A673 (cell line): ENCODE measurements at regions of chr17 and their contacts with region 1.

Region 1: DNA sequence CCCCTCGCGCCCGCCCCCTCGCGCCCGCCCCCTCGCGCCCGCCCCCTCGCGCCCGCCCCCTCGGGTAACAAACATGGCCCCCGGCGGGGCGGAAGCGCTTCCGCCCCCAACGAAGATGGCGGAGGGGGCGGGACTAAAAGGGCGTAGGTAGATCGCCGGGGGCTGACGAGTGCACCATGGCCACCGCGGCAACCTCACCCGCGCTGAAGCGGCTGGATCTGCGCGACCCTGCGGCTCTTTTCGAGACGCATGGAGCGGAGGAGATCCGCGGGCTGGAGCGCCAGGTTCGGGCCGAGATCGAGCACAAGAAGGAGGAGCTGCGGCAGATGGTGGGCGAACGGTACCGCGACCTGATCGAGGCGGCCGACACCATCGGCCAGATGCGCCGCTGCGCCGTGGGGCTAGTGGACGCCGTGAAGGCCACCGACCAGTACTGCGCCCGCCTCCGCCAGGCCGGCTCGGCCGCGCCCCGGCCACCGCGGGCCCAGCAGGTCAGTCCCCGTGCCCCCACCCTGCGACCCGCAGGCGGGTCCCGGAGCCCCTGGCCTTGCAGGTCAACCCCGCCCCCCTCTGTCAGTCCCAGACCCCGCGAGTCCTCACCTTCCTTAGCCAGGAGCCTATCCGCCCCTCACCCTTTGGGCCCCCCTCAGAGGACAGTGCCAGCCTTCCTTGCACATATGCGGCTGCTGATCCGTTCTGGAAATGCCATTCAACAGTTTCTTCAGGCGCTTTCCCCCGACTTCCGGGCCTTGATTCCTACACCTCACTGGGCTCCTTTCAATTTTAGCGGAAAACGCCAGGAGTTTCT is at the start of gene COG1:
- DNase-seq: peak; percentile 95
- H3K4me3 ChIP-seq: peak within 1 kb of the TSS; percentile 86
- H3K27ac ChIP-seq: peak within 1 kb of the TSS; percentile 87
- H3K4me1 ChIP-seq: peaks cover 3% of the 10 kb centered on the region
- H3K27me3 ChIP-seq: no peaks in the 10 kb centered on the region
- CTCF ChIP-seq: no peak
- total RNA-seq, gene COG1: 32.2 and 36.0 TPM in 2 replicates

Region 2: DNA sequence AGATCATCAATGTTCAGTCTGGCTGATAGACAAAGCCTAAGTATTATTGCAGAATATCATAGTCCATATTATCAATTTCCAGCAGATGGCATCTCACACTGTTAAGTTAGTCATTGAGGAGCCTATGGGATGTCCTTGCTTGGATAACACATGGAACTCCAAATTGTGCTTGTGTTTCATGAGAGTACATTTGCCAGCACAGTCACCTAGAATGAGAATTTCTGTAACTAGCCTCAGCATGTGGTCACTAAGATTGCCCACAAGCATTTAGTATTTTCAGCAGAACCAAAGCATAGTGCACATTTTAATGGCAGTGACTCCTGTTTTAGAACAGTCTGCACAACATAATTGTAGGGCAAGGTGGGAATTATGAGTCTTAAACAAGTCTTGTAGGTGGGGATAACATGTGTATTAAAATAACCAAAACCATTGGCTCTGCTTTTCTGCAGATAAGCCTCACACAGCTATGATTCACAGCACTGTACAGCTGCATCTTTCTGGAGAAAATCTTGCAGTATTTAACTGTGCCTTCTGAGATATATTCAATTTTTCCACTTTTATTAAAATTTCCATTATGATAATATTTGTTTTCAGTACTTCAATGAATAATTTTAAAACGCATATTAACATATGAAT is 1955.1 kb before region 1 on chr17:
- CTCF ChIA-PET with region 1: no interaction called
- POLR2A ChIA-PET with region 1: no interaction called
- intact Hi-C with region 1: no loop called
- DNase-seq: peak; percentile 12
- H3K4me3 ChIP-seq: no peak overlapping the region
- H3K27ac ChIP-seq: no peak overlapping the region
- H3K4me1 ChIP-seq: no peaks in the 10 kb centered on the region
- H3K27me3 ChIP-seq: no peaks in the 10 kb centered on the region
- CTCF ChIP-seq: peak; percentile 17; the same call in 1 of the 2 replicates

Region 3: DNA sequence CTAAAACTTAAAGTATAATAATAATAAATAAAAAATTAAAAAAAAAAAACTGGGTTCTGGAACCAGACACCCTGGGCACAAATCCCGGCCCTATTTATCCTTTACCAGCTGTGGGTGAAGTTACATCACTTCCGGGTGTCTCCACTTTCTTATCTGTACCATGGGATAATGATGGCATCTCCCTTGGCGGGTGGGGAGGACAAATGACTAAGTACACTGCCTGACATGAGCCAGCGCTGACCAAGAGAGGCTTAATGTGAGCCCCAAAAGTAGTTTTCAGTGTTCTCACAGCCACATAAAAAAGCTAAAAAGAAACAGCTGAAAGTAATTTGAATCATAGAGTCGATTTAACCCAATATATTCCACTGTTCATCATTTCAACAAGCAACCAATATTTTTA is 647.3 kb before region 1 on chr17:
- CTCF ChIA-PET with region 1: no interaction called
- POLR2A ChIA-PET with region 1: no interaction called
- intact Hi-C with region 1: no loop called
- DNase-seq: no peak
- H3K4me3 ChIP-seq: no peak overlapping the region
- H3K27ac ChIP-seq: no peak overlapping the region
- H3K4me1 ChIP-seq: no peaks in the 10 kb centered on the region
- H3K27me3 ChIP-seq: no peaks in the 10 kb centered on the region
- CTCF ChIP-seq: no peak

Region 4: GRCh38 chr17:73231841-73232586 is 38.9 kb after region 1 on chr17:
- CTCF ChIA-PET with region 1: no interaction called
- POLR2A ChIA-PET with region 1: no interaction called
- intact Hi-C with region 1: loop called (anchors 5 kb)
- DNase-seq: peak; percentile 97
- H3K4me3 ChIP-seq: peak overlapping the region; percentile 98
- H3K27ac ChIP-seq: peak overlapping the region; percentile 94
- H3K4me1 ChIP-seq: peaks cover 27% of the 10 kb centered on the region
- H3K27me3 ChIP-seq: no peaks in the 10 kb centered on the region
- CTCF ChIP-seq: peak; percentile 18; the same call in 1 of the 2 replicates

Region 5: GRCh38 chr17:73365906-73366623 is 173.0 kb after region 1 on chr17:
- CTCF ChIA-PET with region 1: no interaction called
- POLR2A ChIA-PET with region 1: no interaction called
- intact Hi-C with region 1: loop called (anchors 5 kb)
- DNase-seq: no peak
- H3K4me3 ChIP-seq: no peak overlapping the region
- H3K27ac ChIP-seq: no peak overlapping the region
- H3K4me1 ChIP-seq: no peaks in the 10 kb centered on the region
- H3K27me3 ChIP-seq: no peaks in the 10 kb centered on the region
- CTCF ChIP-seq: no peak